HepG2 (cell line): ENCODE measurements at regions of chr6 and their contacts with region 1.

Region 1: GRCh38 chr6:161660666-161661571 is 387.1 kb upstream of the AGPAT4 start:
- DNase-seq: peak; percentile 9
- ATAC-seq: peak; percentile 83
- H3K4me3 ChIP-seq: no peak overlapping the region
- H3K27ac ChIP-seq: no peak overlapping the region
- H3K4me1 ChIP-seq: no peaks in the 10 kb centered on the region
- H3K27me3 ChIP-seq: no peaks in the 10 kb centered on the region
- CTCF ChIP-seq: peak; percentile 54
- EP300 ChIP-seq: no peak
- POLR2A ChIP-seq: no peak
- RAD21 ChIP-seq: no peak

Region 2: GRCh38 chr6:161393839-161394364 is 267.0 kb before region 1 on chr6:
- CTCF ChIA-PET with region 1: no interaction called
- POLR2A ChIA-PET with region 1: no interaction called
- in situ Hi-C with region 1: no loop called
- intact Hi-C with region 1: loop called (anchors 1 kb)
- DNase-seq: peak; percentile 71
- ATAC-seq: peak; percentile 97
- H3K4me3 ChIP-seq: no peak overlapping the region
- H3K27ac ChIP-seq: no peak overlapping the region
- H3K4me1 ChIP-seq: no peaks in the 10 kb centered on the region
- H3K27me3 ChIP-seq: no peaks in the 10 kb centered on the region; a peak in 2 of 5 replicates
- CTCF ChIP-seq: peak; percentile 76
- EP300 ChIP-seq: no peak
- POLR2A ChIP-seq: no peak
- RAD21 ChIP-seq: peak; percentile 60; the same call in 1 of the 2 replicates

Region 3: DNA sequence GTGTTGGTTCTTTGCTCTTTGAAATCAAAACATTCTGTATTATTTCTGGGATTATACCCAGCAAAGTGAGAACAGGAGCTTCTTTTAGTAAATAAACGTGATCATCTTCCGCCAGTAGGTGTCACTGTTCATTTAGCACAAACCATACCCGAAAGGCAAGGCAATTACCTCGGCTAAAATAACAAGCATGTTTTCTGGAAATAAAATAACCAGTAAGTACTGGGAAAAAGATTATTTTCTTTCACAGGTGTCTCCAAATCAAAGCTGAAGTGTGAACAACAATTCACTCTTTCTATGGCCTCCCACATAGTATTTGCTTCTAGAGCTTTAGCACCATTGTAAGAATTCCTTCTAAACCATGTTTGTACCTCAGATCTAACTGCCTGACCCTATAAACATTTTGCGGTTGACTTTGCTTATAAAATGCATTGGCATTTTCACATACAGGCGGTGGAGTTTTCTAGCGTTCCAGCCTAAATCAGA is 242.4 kb before region 1 on chr6:
- CTCF ChIA-PET with region 1: no interaction called
- POLR2A ChIA-PET with region 1: no interaction called
- in situ Hi-C with region 1: no loop called
- intact Hi-C with region 1: loop called (anchors 1 kb)
- DNase-seq: peak; percentile 56
- ATAC-seq: peak; percentile 82
- H3K4me3 ChIP-seq: no peak overlapping the region
- H3K27ac ChIP-seq: no peak overlapping the region
- H3K4me1 ChIP-seq: no peaks in the 10 kb centered on the region
- H3K27me3 ChIP-seq: peaks cover 0 to 36% of the 10 kb centered on the region in 2 experiments; a peak in 3 of 5 replicates
- CTCF ChIP-seq: peak; percentile 74
- EP300 ChIP-seq: no peak
- POLR2A ChIP-seq: no peak
- RAD21 ChIP-seq: peak; percentile 50

Region 4: GRCh38 chr6:161744211-161745067 is 83.5 kb after region 1 on chr6:
- CTCF ChIA-PET with region 1: no interaction called
- POLR2A ChIA-PET with region 1: no interaction called
- in situ Hi-C with region 1: no loop called
- intact Hi-C with region 1: no loop called
- DNase-seq: no peak
- ATAC-seq: no peak
- H3K4me3 ChIP-seq: no peak overlapping the region
- H3K27ac ChIP-seq: no peak overlapping the region
- H3K4me1 ChIP-seq: no peaks in the 10 kb centered on the region
- H3K27me3 ChIP-seq: no peaks in the 10 kb centered on the region
- CTCF ChIP-seq: no peak
- EP300 ChIP-seq: no peak
- POLR2A ChIP-seq: no peak
- RAD21 ChIP-seq: no peak